ENCODE measurements at regions of chr17 and their contacts with region 1.

Region 1: DNA sequence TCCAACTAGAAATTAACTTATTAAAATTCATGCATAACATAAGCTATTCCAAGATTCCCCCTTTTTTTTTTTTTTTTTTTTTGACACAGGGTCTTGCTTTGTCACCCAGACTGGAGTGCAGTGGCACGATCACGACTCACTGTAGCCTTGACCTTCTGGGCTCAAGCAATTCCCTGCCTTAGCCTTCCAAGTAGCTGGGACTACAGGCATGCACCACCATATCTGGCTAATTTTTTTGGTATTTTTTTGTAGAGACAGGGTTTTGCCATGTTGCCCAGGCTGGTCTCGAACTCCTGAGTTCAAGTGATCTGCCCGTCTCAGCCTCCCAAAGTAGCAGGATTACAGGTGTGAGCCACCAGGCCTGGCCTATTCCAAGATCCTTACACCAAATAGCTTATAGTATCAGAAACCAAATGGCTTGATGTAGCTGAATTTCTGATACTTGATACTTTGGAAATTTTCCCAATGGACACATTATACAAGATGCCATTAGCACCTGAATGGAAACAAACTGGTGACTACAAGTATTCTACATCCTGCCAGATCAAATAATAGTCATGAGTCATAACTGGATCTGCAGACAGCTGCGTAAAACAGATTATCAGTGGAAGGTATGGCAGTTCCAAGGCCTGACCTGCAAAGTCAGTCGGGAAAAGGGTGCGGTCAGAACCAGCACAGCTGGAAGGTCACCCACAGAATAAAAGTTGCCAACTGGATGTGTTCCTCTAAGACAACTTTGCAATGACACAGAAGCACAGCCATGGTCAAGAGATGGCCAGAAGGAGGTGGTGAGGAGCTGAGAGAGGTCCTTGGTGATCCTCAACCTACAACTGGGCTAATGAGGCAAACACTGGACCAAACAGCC is 14.5 kb downstream of the TUBG1 start:
- DNase-seq: peak in 5 of 6 donors; percentile 77 to 88 (median 86)
- ATAC-seq: peak; percentile 87 to 95 (median 92)
- H3K4me3 ChIP-seq: no peak overlapping the region
- H3K27ac ChIP-seq: peak overlapping the region; percentile 14 to 81 (median 59)
- H3K4me1 ChIP-seq: peaks cover 19 to 32% (median 28%) of the 10 kb centered on the region in 3 donors
- H3K27me3 ChIP-seq: no peaks in the 10 kb centered on the region
- CTCF ChIP-seq: no peak

Region 2: DNA sequence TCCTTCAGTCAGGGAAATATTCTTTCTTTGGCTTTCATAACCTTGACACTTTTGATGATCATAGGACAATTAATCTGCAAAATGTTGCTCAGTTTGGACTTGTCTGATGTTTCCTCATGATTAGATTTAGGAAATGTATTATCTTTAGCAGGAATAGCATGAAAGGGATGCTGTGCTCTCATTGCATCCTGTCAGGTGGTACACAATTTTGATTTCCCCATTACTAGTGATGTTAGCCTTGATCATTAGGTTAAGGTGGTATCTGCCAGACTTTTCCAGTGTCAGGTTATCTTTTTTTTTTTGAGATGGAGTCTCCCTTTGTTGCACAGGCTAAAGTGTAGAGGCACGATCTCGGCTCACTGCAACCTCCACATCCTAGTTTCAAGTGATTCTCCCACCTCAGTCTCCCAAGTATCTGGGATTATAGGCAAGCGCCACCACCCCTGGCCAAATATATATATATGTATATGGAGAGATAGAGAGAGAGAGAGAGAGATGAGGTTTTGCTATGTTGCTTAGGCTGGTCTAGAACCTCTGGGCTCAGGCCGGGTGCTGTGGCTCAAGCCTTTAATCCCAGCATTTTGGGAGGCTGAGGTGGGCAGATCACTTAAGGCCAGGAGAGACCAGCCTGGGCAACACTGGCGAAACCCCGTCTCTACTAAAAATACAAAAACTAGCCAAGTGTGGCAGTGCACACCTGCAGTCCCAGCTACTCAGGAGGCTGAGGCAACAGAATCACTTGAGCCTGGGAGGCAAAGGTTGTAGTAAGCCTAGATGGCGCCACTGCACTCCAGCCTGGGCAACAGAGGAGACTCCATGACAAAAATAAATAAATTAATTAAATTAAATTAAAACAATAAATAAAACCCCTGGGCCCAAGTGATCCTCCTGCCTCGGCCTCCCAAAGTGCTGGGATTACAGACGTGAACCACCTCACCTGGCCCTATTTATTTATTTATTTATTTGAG is 185.1 kb before region 1 on chr17:
- intact Hi-C with region 1: no loop called
- DNase-seq: no peak
- ATAC-seq: no peak
- H3K4me3 ChIP-seq: no peak overlapping the region
- H3K27ac ChIP-seq: no peak overlapping the region
- H3K4me1 ChIP-seq: no peaks in the 10 kb centered on the region
- H3K27me3 ChIP-seq: no peaks in the 10 kb centered on the region
- CTCF ChIP-seq: peak in 2 of 4 donors; percentile 15 to 18

Region 3: DNA sequence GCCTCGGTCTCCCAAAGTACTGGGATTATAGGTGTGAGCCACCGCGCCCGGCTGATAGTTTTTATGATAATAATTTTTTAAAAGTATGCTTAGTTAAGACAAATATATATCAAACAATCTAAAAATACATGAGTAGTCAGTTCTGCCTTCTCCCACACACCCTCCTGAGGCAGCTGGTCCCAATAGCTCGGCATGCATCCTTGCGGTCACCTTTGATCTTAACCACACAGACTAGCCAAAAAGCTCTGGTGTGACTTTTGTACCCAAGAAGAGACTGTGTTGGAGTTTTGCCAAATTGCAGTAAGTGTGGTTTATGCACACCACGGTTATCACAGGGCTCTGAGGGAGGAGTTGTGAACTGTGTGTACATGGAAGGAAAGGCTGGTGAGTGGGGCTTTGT is 139.7 kb before region 1 on chr17:
- intact Hi-C with region 1: no loop called
- DNase-seq: no peak
- ATAC-seq: peak in 2 of 4 donors; percentile 28 to 35
- H3K4me3 ChIP-seq: no peak overlapping the region
- H3K27ac ChIP-seq: no peak overlapping the region
- H3K4me1 ChIP-seq: no peaks in the 10 kb centered on the region
- H3K27me3 ChIP-seq: no peaks in the 10 kb centered on the region
- CTCF ChIP-seq: no peak

Region 4: GRCh38 chr17:42677008-42677857 is 53.3 kb after region 1 on chr17:
- intact Hi-C with region 1: loop called in 2 of 3 experiments (anchors 5 to 10 kb)
- DNase-seq: peak; percentile 99 to 100 (median 100)
- ATAC-seq: peak; percentile 58 to 73 (median 65)
- H3K4me3 ChIP-seq: peak overlapping the region; percentile 79 to 92 (median 85)
- H3K27ac ChIP-seq: peak overlapping the region; percentile 83 to 97 (median 90)
- H3K4me1 ChIP-seq: peaks cover 6 to 44% (median 19%) of the 10 kb centered on the region in 3 donors
- H3K27me3 ChIP-seq: no peaks in the 10 kb centered on the region
- CTCF ChIP-seq: no peak